Activated B cell treated with CpG ODN at 0.5 μM for 24 hours (primary cell): ENCODE measurements at regions of chr5 and their contacts with region 1.

Region 1: GRCh38 chr5:5421961-5422818 is at the start of gene ICE1:
- DNase-seq: peak; percentile 92
- ATAC-seq: peak; percentile 87
- H3K4me3 Mint-ChIP-seq: peak within 1 kb of the TSS; percentile 96
- H3K27ac Mint-ChIP-seq: peak within 1 kb of the TSS; percentile 95
- H3K4me1 Mint-ChIP-seq: peaks cover 15% of the 10 kb centered on the region
- H3K27me3 Mint-ChIP-seq: no peaks in the 10 kb centered on the region
- CTCF ChIP-seq: no peak
- total RNA-seq, gene ICE1: 32.7 and 36.8 TPM in 2 replicates

Region 2: DNA sequence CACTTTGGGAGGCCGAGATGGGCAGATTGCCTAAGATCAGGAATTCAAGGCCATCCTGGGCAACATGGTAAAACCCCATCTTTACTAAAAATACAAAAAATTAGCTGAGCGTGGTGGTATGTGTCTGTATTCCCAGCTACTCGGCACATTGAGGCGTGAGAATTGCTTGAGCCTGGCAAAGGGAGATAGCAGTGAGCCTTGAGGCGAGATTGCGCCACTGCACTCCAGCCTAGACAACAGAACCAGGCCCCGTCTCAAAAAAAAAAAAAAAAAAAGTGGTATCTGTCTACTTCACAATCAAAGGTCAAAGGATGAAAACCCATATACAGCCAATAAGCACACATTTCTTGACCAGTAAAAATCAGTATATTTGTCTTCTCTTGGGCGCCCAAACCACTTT is 1010.5 kb before region 1 on chr5:
- CTCF ChIA-PET with region 1: no interaction called
- POLR2A ChIA-PET with region 1: no interaction called
- intact Hi-C with region 1: no loop called
- DNase-seq: no peak
- ATAC-seq: no peak
- H3K4me3 Mint-ChIP-seq: no peak overlapping the region
- H3K27ac Mint-ChIP-seq: no peak overlapping the region
- H3K4me1 Mint-ChIP-seq: no peaks in the 10 kb centered on the region
- H3K27me3 Mint-ChIP-seq: no peaks in the 10 kb centered on the region
- CTCF ChIP-seq: no peak

Region 3: DNA sequence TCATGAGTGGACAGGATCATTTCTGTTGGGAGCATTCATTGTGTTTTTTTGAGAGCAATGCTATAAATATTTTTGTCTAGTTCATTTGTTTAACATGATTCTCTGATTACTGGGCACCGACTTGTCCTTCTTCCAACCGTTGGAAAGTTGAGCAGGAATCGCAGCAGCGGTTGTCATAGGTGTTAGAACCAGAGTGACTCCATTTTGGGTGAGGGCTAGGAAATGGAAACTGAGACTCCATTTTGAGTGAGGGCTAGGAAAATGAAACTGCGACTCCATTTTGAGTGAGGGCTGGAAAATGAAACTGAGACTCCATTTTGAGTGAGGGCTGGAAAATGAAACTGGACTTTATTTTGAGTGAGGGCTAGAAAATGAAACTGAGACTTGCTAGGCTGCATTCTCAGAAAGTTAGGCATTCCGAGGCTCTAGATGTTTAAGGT is 100.9 kb after region 1 on chr5:
- CTCF ChIA-PET with region 1: no interaction called
- POLR2A ChIA-PET with region 1: interaction called, 3 read pairs
- intact Hi-C with region 1: loop called (anchors 1 kb)
- DNase-seq: no peak
- ATAC-seq: peak; percentile 60
- H3K4me3 Mint-ChIP-seq: peak overlapping the region; percentile 32
- H3K27ac Mint-ChIP-seq: peak overlapping the region; percentile 10
- H3K4me1 Mint-ChIP-seq: peaks cover 12% of the 10 kb centered on the region
- H3K27me3 Mint-ChIP-seq: no peaks in the 10 kb centered on the region
- CTCF ChIP-seq: no peak

Region 4: DNA sequence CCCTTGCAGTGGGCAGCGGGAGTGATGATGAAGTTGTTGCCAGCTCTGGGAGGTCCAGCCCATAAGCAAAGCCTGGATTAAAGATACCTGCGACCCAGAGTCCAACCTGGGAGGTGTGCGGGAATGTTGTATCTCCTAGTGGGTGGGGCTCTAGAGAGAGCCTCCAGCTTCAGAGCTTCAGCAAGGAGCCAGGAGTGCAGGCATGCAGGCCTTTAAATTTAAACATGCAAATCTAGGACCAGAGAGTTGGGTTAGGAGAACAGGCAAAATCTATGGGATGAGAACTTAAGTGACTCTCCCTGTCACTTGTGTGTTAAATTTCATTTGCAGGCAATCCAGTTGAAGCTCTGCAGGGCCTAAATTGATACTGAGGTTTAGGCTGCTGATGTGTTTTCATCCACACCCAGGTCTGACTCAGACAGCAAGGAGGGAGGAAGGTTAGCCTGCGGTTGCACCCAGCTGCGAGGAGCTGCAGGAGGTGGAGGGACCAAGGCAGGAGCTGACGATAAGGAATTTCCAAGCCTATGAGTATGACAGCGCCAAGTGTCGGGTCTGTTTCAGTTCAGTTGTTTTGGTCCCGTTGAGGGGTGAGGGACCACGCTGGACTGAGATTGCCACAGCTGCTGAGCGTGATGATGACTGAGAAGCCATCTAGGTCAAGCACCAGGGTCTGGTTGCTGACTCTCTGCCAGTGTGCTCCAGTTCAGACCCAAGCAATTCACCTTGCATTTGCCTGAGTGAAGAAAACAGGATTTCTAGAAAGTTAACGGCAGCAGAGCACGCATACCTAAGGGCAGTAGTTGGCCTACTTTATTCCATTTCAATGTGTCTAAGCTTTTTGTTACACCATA is 243.3 kb after region 1 on chr5:
- CTCF ChIA-PET with region 1: no interaction called
- POLR2A ChIA-PET with region 1: no interaction called
- intact Hi-C with region 1: no loop called
- DNase-seq: no peak
- ATAC-seq: no peak
- H3K4me3 Mint-ChIP-seq: no peak overlapping the region
- H3K27ac Mint-ChIP-seq: no peak overlapping the region
- H3K4me1 Mint-ChIP-seq: no peaks in the 10 kb centered on the region
- H3K27me3 Mint-ChIP-seq: peaks cover 6% of the 10 kb centered on the region
- CTCF ChIP-seq: no peak

Region 5: GRCh38 chr5:6480133-6481051 is 1058.2 kb after region 1 on chr5:
- CTCF ChIA-PET with region 1: no interaction called
- POLR2A ChIA-PET with region 1: no interaction called
- intact Hi-C with region 1: loop called (anchors 5 kb)
- DNase-seq: no peak
- ATAC-seq: no peak
- H3K4me3 Mint-ChIP-seq: no peak overlapping the region
- H3K27ac Mint-ChIP-seq: peak overlapping the region; percentile 53
- H3K4me1 Mint-ChIP-seq: peaks cover 36% of the 10 kb centered on the region
- H3K27me3 Mint-ChIP-seq: peaks cover 2% of the 10 kb centered on the region
- CTCF ChIP-seq: no peak

Region 6: DNA sequence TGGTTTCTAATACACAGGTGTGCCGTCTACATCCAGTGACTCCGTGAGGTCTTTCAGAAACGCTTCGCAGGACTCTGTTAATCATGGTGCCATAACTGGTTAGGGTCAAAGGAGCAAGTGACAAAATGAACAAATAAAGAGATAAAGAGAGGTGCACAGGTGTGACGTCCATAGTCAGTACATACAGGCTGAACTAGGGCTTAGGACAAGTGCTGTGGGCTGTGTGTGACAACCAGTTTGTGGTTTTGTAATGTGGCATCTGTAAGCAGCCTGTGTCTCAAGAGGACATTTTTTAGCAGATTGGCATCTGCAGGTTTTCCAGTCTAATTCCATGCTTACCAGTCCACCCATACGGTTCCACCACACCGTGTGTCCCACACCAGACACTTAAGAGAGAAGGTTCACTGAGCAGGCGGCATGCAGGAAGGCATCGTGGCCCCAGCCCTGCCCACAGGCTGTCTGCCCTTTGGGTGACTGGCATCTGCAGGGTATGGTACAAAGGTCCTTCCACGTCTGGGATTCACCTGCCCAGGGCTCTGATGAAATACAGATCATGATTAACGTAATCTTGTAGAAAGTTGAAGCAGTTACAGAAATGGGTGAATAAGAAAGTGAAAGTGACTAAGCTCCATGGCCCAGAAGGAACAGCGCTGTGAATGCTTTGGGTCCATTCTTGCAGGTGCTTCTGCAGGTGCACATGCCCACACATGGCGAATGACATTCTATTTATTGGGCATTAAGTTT is 1237.9 kb after region 1 on chr5:
- CTCF ChIA-PET with region 1: no interaction called
- POLR2A ChIA-PET with region 1: no interaction called
- intact Hi-C with region 1: loop called (anchors 1 kb)
- DNase-seq: peak; percentile 35
- ATAC-seq: peak; percentile 78
- H3K4me3 Mint-ChIP-seq: peak overlapping the region; percentile 80
- H3K27ac Mint-ChIP-seq: peak overlapping the region; percentile 96
- H3K4me1 Mint-ChIP-seq: peaks cover 31% of the 10 kb centered on the region
- H3K27me3 Mint-ChIP-seq: no peaks in the 10 kb centered on the region
- CTCF ChIP-seq: no peak